PC-3 (cell line): ENCODE measurements at regions of chr20 and their contacts with region 1.

Region 1: DNA sequence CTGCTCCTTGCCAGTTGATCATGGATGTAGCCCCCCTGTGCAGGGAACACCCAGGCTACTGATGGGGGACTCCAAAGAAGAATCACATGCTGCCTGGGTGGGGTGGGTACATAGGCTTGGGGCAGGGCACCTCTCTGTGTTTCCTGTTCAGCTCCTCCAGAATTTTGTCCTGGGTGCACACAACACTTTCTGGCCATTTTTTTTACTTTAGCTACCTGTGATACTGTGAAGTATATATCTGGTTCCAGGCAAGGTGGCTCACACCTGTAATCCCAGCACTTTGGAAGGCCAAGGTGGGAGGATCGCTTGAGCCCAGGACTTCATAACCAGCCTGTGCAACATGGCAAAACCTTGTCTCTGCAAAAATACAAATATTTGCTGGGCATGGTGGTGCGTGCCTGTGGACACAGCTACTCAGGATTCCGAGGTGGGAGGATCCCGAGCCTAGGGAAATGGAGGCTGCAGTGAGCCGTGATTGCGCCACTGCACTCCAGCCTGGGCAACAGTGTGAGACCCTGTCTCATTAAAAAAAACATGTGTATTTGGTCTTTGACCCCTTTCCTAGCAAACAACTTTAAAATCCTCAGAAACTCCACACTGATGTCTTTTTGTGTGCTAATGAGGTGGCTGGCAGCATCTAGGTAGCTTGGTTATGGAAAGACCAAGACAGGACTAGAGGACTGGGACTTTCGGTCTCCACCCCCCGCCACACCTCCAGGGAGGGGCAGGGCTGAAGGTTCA is 14.1 kb downstream of the SLC4A11 start:
- DNase-seq: peak; percentile 72
- ATAC-seq: peak; percentile 40
- H3K4me3 ChIP-seq: peak overlapping the region; percentile 38
- H3K27ac ChIP-seq: peak overlapping the region; percentile 83
- H3K4me1 ChIP-seq: peaks cover 51% of the 10 kb centered on the region
- H3K27me3 ChIP-seq: no peaks in the 10 kb centered on the region
- CTCF ChIP-seq: no peak

Region 2: GRCh38 chr20:3239026-3239866 is 14.4 kb after region 1 on chr20 and contains the start of gene SLC4A11:
- CTCF ChIA-PET with region 1: interaction called, 3 read pairs
- POLR2A ChIA-PET with region 1: interaction called, 18 read pairs
- intact Hi-C with region 1: loop called (anchors 1 kb)
- DNase-seq: peak; percentile 72
- ATAC-seq: peak; percentile 65
- H3K4me3 ChIP-seq: peak within 1 kb of the TSS; percentile 92
- H3K27ac ChIP-seq: no peak within 1 kb of the TSS
- H3K4me1 ChIP-seq: peaks cover 39% of the 10 kb centered on the region
- H3K27me3 ChIP-seq: no peaks in the 10 kb centered on the region
- CTCF ChIP-seq: no peak
- total RNA-seq, gene SLC4A11: 23.7 and 26.8 TPM in 2 replicates